ENCODE measurements at regions of chr15 and their contacts with region 1.

Region 1: GRCh38 chr15:33460149-33460805 is 149.5 kb downstream of the RYR3 start:
- DNase-seq: peak; percentile 32 to 88
- H3K4me3 ChIP-seq: peak overlapping the region; percentile 19; the same call in 1 of the 2 replicates
- H3K27ac ChIP-seq: peak overlapping the region; percentile 99
- H3K4me1 ChIP-seq: peaks cover 29% of the 10 kb centered on the region
- H3K27me3 ChIP-seq: no peaks in the 10 kb centered on the region
- CTCF ChIP-seq: no peak

Region 2: DNA sequence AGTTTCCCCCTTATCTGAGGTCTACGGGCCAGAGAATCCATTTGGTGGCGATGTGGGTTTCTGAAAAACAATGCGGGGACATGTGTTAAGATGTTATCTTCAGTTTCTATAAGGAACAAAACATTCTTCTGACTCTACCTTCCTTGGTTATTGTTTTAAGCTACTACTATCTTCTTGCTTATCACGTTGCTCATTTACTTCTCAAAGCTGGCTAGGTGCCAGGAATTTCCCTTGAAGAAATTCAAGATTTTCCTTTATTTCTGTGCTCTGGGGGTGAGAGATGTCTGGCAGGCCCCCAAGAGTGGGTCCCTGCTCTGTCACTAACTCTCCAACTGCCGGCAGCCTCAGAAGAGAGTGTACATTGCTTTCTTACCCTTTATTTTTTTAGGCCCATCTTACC is 29.7 kb before region 1 on chr15:
- CTCF ChIA-PET with region 1: no interaction called
- POLR2A ChIA-PET with region 1: no interaction called
- intact Hi-C with region 1: no loop called
- DNase-seq: no peak
- H3K4me3 ChIP-seq: no peak overlapping the region
- H3K27ac ChIP-seq: no peak overlapping the region
- H3K4me1 ChIP-seq: no peaks in the 10 kb centered on the region
- H3K27me3 ChIP-seq: no peaks in the 10 kb centered on the region
- CTCF ChIP-seq: no peak

Region 3: DNA sequence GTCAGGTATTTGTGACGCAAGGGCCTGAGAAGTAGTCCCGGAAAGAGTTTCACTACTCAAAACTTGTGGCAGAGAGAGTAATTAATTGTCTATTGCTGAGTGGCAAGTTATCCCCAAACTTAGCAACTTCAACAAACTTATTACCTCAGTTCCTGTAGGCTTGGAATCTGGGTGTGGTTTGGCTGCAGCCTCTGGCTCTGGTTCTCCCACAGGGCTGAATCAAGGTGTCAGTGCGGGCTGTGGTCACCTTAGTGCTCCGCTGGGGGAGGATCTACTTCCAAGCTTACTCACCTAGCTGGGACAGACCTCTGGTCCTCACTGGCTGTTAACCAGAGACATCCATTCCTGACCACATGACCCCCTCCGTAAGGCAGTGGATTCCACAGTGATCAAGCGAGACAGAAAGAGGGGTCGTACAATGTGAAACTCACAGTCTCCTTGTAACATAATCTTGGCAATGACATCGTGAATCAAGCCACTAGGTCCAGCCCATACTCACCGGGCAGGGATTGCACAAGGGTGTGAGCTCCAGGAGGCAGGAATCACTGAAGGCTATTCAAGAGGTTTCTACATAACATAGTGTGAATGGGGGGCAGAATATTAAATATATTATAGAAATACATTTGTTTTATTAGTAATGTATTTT is 11.2 kb before region 1 on chr15:
- CTCF ChIA-PET with region 1: no interaction called
- POLR2A ChIA-PET with region 1: interaction called, 22 read pairs
- intact Hi-C with region 1: no loop called
- DNase-seq: peak; percentile 70 to 89
- H3K4me3 ChIP-seq: peak overlapping the region; percentile 42; the same call in 1 of the 2 replicates
- H3K27ac ChIP-seq: peak overlapping the region; percentile 95
- H3K4me1 ChIP-seq: peaks cover 21% of the 10 kb centered on the region
- H3K27me3 ChIP-seq: no peaks in the 10 kb centered on the region
- CTCF ChIP-seq: no peak

Region 4: GRCh38 chr15:33623010-33623409 is 162.7 kb after region 1 on chr15:
- CTCF ChIA-PET with region 1: no interaction called
- POLR2A ChIA-PET with region 1: no interaction called
- intact Hi-C with region 1: no loop called
- DNase-seq: no peak
- H3K4me3 ChIP-seq: no peak overlapping the region
- H3K27ac ChIP-seq: no peak overlapping the region
- H3K4me1 ChIP-seq: no peaks in the 10 kb centered on the region
- H3K27me3 ChIP-seq: no peaks in the 10 kb centered on the region
- CTCF ChIP-seq: no peak

Region 5: DNA sequence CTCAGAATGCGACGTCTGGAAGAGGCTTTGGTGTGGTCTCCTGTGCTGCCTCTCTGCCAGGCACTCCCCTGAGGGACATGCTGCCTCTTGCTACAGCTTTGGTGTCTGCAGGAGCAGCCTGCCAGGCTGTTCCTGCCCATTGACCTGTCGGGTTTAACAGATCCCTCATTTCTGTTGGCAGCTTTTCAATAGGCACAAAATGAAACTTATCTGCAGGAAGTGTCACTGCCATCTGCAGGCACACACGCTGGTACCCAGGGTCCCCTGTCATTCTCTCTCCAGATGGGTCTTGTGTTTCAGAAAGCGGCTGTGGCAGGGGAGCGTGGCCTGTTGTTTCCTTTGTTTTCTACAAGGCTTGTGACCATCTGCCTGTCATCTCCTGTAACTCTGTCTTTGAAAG is 179.7 kb after region 1 on chr15:
- CTCF ChIA-PET with region 1: no interaction called
- POLR2A ChIA-PET with region 1: no interaction called
- intact Hi-C with region 1: no loop called
- DNase-seq: no peak
- H3K4me3 ChIP-seq: no peak overlapping the region
- H3K27ac ChIP-seq: no peak overlapping the region
- H3K4me1 ChIP-seq: no peaks in the 10 kb centered on the region
- H3K27me3 ChIP-seq: peaks cover 8% of the 10 kb centered on the region; the same call in 1 of the 2 replicates
- CTCF ChIP-seq: no peak

Region 6: GRCh38 chr15:33720952-33721351 is 260.7 kb after region 1 on chr15:
- CTCF ChIA-PET with region 1: no interaction called
- POLR2A ChIA-PET with region 1: interaction called, 11 read pairs
- intact Hi-C with region 1: no loop called
- DNase-seq: peak in 1 of 2 experiments; percentile 37
- H3K4me3 ChIP-seq: no peak overlapping the region
- H3K27ac ChIP-seq: no peak overlapping the region
- H3K4me1 ChIP-seq: no peaks in the 10 kb centered on the region
- H3K27me3 ChIP-seq: no peaks in the 10 kb centered on the region
- CTCF ChIP-seq: no peak

Measured in PC-9 (cell line).